Cardiac septum (tissue), 1 donor: ENCODE measurements at regions of chrX and their contacts with region 1.

Region 1: GRCh38 chrX:10379878-10380277 is 223.1 kb downstream of the CLCN4 start:
- DNase-seq: no peak

Region 2: GRCh38 chrX:10296576-10296975 is 83.3 kb before region 1 on chrX:
- intact Hi-C with region 1: loop called (anchors 10 kb)
- DNase-seq: no peak